Activated CD8-positive, alpha-beta T cell treated with anti-CD3 and anti-CD28 coated beads for 36 hours (primary cell): ENCODE measurements at regions of chr1 and their contacts with region 1.

Region 1: GRCh38 chr1:223748773-223749733 is 36.7 kb downstream of the CAPN2 start:
- DNase-seq: peak; percentile 70
- ATAC-seq: peak; percentile 85
- H3K4me3 Mint-ChIP-seq: peak overlapping the region; percentile 58
- H3K27ac Mint-ChIP-seq: no peak overlapping the region
- H3K4me1 Mint-ChIP-seq: peaks cover 9% of the 10 kb centered on the region
- H3K27me3 Mint-ChIP-seq: no peaks in the 10 kb centered on the region
- CTCF ChIP-seq: peak; percentile 99

Region 2: DNA sequence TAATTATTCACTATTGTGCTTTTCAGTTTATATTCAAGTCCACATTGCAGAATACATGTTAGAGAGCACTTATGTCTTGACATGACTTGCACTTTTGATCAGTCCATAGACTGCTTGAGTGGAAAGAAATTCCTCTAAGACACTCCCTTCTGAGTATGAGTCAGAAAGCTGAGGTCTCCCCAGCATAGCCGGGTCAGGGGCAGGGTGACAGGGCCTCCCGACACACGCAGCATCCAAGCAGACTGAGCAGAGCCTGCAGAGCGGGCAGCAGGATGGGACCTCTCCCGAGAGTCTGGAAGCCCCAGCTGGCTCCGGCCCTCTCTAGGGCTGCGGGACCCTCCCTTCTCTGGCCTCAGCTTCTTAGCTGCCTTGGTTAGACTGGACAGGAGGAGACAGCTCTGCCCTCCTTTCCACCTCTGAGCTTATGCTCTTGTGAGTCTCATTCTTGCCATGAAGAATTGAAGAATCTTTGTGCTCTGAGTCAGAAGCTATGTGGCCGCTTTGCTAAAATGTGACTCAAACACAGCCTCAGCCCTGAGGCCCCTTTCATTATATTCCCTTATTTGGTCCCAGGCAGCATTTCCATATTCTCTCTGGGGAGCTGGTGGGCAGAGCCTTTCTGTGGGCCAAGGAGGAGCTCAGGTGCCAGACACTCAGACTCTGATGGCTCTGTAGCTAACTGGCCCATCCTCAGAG is 48.0 kb before region 1 on chr1:
- CTCF ChIA-PET with region 1: interaction called, 95 read pairs
- POLR2A ChIA-PET with region 1: interaction called, 4 read pairs
- intact Hi-C with region 1: loop called (anchors 2 kb)
- DNase-seq: peak; percentile 52
- ATAC-seq: peak; percentile 54
- H3K4me3 Mint-ChIP-seq: no peak overlapping the region
- H3K27ac Mint-ChIP-seq: peak overlapping the region; percentile 63
- H3K4me1 Mint-ChIP-seq: peaks cover 40% of the 10 kb centered on the region
- H3K27me3 Mint-ChIP-seq: no peaks in the 10 kb centered on the region
- CTCF ChIP-seq: no peak

Region 3: GRCh38 chr1:223726380-223727001 is 22.6 kb before region 1 on chr1:
- CTCF ChIA-PET with region 1: interaction called, 60 read pairs
- POLR2A ChIA-PET with region 1: no interaction called
- intact Hi-C with region 1: no loop called
- DNase-seq: peak; percentile 97
- ATAC-seq: peak; percentile 97
- H3K4me3 Mint-ChIP-seq: peak overlapping the region; percentile 34
- H3K27ac Mint-ChIP-seq: peak overlapping the region; percentile 93
- H3K4me1 Mint-ChIP-seq: peaks cover 60% of the 10 kb centered on the region
- H3K27me3 Mint-ChIP-seq: no peaks in the 10 kb centered on the region
- CTCF ChIP-seq: no peak

Region 4: GRCh38 chr1:223738465-223739365 is 10.3 kb before region 1 on chr1:
- CTCF ChIA-PET with region 1: interaction called, 20 read pairs
- POLR2A ChIA-PET with region 1: no interaction called
- intact Hi-C with region 1: no loop called
- DNase-seq: no peak
- ATAC-seq: no peak
- H3K4me3 Mint-ChIP-seq: no peak overlapping the region
- H3K27ac Mint-ChIP-seq: no peak overlapping the region
- H3K4me1 Mint-ChIP-seq: peaks cover 3% of the 10 kb centered on the region
- H3K27me3 Mint-ChIP-seq: no peaks in the 10 kb centered on the region
- CTCF ChIP-seq: no peak

Region 5: GRCh38 chr1:223771814-223772770 is 23.0 kb after region 1 on chr1:
- CTCF ChIA-PET with region 1: interaction called, 14 read pairs
- POLR2A ChIA-PET with region 1: no interaction called
- intact Hi-C with region 1: no loop called
- DNase-seq: peak; percentile 14
- ATAC-seq: no peak
- H3K4me3 Mint-ChIP-seq: no peak overlapping the region
- H3K27ac Mint-ChIP-seq: peak overlapping the region; percentile 39
- H3K4me1 Mint-ChIP-seq: peaks cover 37% of the 10 kb centered on the region
- H3K27me3 Mint-ChIP-seq: no peaks in the 10 kb centered on the region
- CTCF ChIP-seq: no peak